GM18951 (cell line): ENCODE measurements at regions of chr1 and their contacts with region 1.

Region 1: DNA sequence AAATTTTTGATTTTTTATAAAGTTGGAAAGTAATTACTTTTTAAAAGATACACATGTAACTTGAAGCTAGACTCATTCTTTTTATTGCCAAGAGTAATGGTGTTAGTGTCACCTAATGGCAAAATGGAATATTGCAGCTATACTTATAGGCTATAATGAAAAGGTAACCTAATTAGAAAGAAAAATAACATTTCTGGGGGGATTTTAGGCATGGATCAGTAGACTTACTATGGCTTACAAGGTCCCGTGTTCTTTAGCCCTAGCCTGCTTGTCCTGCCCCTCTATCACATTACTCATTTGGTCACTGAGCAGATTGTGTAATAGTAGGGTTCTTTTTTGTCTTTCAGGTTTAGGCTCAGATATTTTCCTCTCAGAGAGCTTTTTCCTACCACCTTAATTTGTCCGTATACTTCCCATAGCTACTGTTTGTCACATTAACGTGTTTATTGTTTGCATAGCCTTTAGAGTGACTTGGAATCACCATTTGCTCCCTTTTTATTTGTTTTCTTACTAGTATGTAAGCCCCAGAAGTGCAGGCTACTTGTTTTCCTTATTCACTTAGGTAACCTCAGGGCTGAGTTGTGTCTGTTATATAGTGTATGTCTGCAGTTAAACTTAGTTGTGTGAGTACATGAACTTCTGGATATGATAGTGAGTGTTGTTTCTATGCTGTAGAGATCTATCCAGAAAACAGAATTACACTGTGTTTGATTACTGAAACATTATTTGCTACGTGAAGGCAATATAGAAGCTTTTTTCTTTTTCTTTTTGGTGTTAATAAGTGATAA is 58.7 kb downstream of the RABGAP1L start:
- POLR2A ChIP-seq: no peak

Region 2: DNA sequence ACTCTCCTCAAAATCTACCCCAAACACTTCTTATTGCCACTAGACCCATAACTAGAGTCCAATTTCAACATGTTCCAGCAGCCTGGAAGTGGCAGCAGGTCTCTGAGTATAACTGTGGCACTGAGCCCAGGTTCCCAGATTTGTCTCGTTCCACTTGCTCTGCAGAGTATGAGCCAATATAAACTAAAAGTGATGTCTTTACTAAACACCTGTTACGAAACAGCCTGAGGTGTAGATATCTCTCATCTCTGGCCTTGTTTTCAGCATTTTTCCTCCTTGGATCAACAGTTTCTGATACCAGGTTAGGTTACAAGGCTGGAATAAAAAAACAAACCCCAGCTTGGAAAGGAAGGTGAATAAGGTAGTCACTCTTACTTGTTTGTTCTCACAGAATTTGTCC is 766.0 kb before region 1 on chr1:
- in situ Hi-C with region 1: loop called (anchors 25 kb)
- POLR2A ChIP-seq: no peak

Region 3: DNA sequence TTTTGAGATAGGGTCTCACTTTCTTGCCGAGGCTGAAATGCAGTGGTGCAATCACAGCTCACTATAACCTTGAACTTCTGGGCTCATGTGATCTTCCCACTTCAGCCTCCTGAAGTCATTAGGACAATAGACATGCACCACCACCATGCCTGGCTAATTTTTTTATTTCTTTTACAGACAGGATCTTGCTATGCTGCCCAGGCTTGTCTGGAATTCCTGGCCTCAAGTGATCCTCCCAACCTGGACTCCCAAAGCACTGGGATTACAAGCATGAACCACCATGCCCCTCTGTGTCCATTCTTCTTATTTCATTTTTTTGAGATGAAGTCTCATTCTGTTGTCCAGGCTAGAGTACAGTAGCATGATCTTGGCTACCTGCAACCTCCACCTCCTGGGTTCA is 515.2 kb before region 1 on chr1:
- in situ Hi-C with region 1: no loop called
- POLR2A ChIP-seq: no peak